Esophagus muscularis mucosa (tissue), 4 donors: ENCODE measurements at regions of chr17 and their contacts with region 1.

Region 1: DNA sequence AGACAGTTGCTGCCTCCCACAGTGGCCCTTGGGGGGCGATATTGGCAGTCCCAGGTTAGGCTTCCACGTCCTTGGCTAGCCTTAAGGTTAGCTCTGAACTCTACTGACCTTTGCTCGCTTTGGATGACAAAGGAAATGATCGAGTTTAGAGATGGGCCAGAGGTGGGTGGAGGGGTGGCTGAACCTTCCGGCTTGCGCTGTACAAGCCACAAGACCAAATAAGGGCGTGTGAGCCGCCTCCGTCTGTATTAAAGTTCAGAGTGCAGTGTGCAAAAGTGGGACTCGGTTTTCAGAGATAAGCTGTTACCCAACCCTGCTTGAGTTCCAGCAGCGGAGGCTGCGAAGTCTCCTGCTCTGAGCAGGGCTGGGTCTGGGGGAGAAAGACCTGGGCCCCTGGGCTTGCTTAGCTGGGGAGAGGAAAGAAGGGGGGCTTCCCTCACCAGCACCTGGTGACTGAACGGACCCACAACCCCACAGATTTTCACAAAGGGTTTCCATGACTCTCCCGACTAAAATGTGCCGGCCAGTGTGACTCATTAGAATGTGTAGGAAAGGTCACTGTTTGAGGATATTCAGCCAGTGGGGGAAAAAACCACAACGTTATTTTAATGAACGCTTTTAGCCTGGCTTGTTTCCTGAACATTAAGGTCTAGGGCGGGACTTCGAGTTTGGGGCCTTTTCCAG is 67.2 kb downstream of the CENPV start:
- DNase-seq: peak; percentile 97
- H3K4me3 ChIP-seq: peak overlapping the region; percentile 32 to 41 (median 36)
- H3K27ac ChIP-seq: peak overlapping the region; percentile 84 to 92 (median 90)
- H3K4me1 ChIP-seq: peaks cover 26 to 39% (median 37%) of the 10 kb centered on the region in 4 donors
- H3K27me3 ChIP-seq: no peaks in the 10 kb centered on the region
- CTCF ChIP-seq: peak in 2 of 3 experiments; percentile 46 to 52
- EP300 ChIP-seq: no peak
- POLR2A ChIP-seq: no peak

Region 2: GRCh38 chr17:16135461-16135860 is 150.6 kb before region 1 on chr17:
- intact Hi-C with region 1: no loop called
- DNase-seq: no peak
- H3K4me3 ChIP-seq: no peak overlapping the region
- H3K27ac ChIP-seq: no peak overlapping the region
- H3K4me1 ChIP-seq: peaks cover 0 to 7% (median 0%) of the 10 kb centered on the region in 4 donors
- H3K27me3 ChIP-seq: no peaks in the 10 kb centered on the region
- CTCF ChIP-seq: no peak
- EP300 ChIP-seq: no peak
- POLR2A ChIP-seq: no peak

Region 3: DNA sequence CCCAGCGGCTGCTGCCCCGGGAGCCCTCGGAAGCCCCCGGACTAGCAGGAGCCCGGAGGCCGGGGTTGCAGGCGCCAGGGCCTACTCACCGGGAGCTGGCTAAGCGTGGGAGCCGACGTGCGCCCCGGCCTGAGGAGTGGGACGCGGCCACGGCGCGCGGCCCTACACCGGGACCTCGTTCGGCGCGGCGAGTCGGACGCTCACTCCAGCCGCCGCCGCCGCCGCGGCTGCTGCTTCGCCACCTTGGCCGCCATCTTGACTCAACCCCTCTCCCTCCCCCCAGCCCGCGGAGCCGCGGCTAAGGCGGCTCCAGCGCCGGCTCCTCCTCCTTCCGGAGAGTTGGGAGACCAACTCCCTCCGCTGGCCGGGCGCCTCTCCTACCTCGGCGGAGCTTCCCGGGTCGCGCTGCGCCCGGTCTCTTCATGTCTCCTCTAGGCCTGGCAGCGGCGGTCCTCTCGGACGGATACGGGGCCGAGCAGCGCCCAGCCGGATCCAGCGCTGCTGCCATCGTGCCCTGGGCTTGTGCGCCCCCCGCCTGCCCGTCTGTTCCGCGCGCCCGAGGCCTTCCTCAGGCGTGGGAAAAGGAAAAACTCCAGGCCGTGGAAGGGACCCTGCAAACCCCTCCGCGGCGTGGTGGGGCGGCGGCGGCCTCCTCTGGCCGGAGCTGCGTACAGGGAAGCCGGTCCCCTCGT is 70.7 kb before region 1 on chr17 and contains the start of gene NCOR1:
- intact Hi-C with region 1: loop called (anchors 2 kb)
- DNase-seq: peak; percentile 94
- H3K4me3 ChIP-seq: peak within 1 kb of the TSS; percentile 91 to 99 (median 99)
- H3K27ac ChIP-seq: peak within 1 kb of the TSS; percentile 91 to 99 (median 96)
- H3K4me1 ChIP-seq: peaks cover 43 to 68% (median 64%) of the 10 kb centered on the region in 4 donors
- H3K27me3 ChIP-seq: no peaks in the 10 kb centered on the region
- CTCF ChIP-seq: peak; percentile 26 to 47 (median 33)
- EP300 ChIP-seq: no peak
- POLR2A ChIP-seq: peak; percentile 41
- total RNA-seq, gene NCOR1: 100 to 123 (median 109) TPM

Region 4: GRCh38 chr17:16342979-16343378 is 56.9 kb after region 1 on chr17:
- intact Hi-C with region 1: no loop called
- DNase-seq: no peak
- H3K4me3 ChIP-seq: no peak overlapping the region
- H3K27ac ChIP-seq: no peak overlapping the region
- H3K4me1 ChIP-seq: no peaks in the 10 kb centered on the region
- H3K27me3 ChIP-seq: no peaks in the 10 kb centered on the region
- CTCF ChIP-seq: no peak
- EP300 ChIP-seq: no peak
- POLR2A ChIP-seq: no peak

Region 5: GRCh38 chr17:16353317-16354174 is 67.4 kb after region 1 on chr17 and contains the start of gene CENPV:
- intact Hi-C with region 1: loop called (anchors 5 kb)
- DNase-seq: no peak
- H3K4me3 ChIP-seq: peak within 1 kb of the TSS; percentile 74 to 83 (median 76)
- H3K27ac ChIP-seq: peak within 1 kb of the TSS; percentile 58 to 74 (median 71)
- H3K4me1 ChIP-seq: peaks cover 9 to 24% (median 20%) of the 10 kb centered on the region in 4 donors
- H3K27me3 ChIP-seq: no peaks in the 10 kb centered on the region
- CTCF ChIP-seq: peak in 1 of 3 experiments; percentile 18
- EP300 ChIP-seq: no peak
- POLR2A ChIP-seq: no peak
- total RNA-seq, gene CENPV: 4.2 to 10.9 (median 8.2) TPM